ENCODE measurements at regions of chr9 and their contacts with region 1.

Region 1: GRCh38 chr9:92963831-92964626 is 16.7 kb downstream of the FGD3 start:
- DNase-seq: peak; percentile 71
- H3K4me3 Mint-ChIP-seq: peak overlapping the region; percentile 88
- H3K27ac Mint-ChIP-seq: peak overlapping the region; percentile 95
- H3K4me1 Mint-ChIP-seq: peaks cover 45% of the 10 kb centered on the region
- H3K27me3 Mint-ChIP-seq: no peaks in the 10 kb centered on the region

Region 2: GRCh38 chr9:92877531-92878430 is 86.2 kb before region 1 on chr9 and contains the start of gene ZNF484:
- intact Hi-C with region 1: loop called (anchors 5 kb)
- DNase-seq: peak; percentile 93
- H3K4me3 Mint-ChIP-seq: peak within 1 kb of the TSS; percentile 95
- H3K27ac Mint-ChIP-seq: peak within 1 kb of the TSS; percentile 95
- H3K4me1 Mint-ChIP-seq: peaks cover 33% of the 10 kb centered on the region
- H3K27me3 Mint-ChIP-seq: no peaks in the 10 kb centered on the region
- total RNA-seq, gene ZNF484: 7.5 and 8.0 TPM in 2 replicates

Region 3: GRCh38 chr9:93003552-93004407 is 39.8 kb after region 1 on chr9:
- intact Hi-C with region 1: loop called (anchors 5 kb)
- DNase-seq: peak; percentile 40
- H3K4me3 Mint-ChIP-seq: no peak overlapping the region
- H3K27ac Mint-ChIP-seq: peak overlapping the region; percentile 72
- H3K4me1 Mint-ChIP-seq: peaks cover 31% of the 10 kb centered on the region
- H3K27me3 Mint-ChIP-seq: no peaks in the 10 kb centered on the region

Region 4: DNA sequence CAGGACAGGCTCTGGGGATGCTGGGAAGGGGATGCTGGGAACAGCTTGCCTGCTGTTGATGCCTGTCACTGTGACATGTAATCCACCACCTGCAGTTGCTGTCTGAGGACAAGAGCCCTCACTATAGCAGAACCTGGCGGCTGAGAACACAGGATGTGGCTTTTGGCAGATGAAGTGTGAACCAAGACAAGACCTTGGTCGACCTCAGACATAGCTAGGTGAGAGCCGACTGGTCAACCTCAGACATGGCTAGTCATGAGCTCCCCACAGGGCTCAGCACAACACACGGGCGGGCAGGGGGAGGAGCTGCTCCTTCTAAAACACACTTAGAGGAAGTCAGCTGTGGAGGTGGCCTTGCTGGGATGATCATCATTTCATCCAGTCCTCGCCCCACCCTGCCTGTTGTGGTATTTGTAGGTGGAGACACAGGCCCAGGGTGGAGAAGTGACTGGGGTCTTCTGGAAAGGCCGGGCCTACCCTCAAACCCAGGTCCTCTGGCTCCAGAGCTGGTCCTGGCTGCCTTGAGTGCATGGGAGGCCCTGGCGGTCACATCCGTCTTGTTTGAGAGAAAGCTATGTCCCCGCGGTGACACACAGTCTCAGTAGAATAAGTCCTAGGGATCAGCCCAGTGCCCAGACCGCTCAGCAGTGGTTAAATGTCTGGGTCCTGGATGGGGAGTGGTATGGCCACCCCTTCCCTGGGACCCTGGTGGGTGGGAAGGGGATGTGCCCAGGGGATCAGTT is 100.5 kb after region 1 on chr9:
- intact Hi-C with region 1: loop called (anchors 5 kb)
- DNase-seq: peak; percentile 90
- H3K4me3 Mint-ChIP-seq: peak overlapping the region; percentile 76
- H3K27ac Mint-ChIP-seq: peak overlapping the region; percentile 94
- H3K4me1 Mint-ChIP-seq: peaks cover 64% of the 10 kb centered on the region
- H3K27me3 Mint-ChIP-seq: no peaks in the 10 kb centered on the region

Region 5: DNA sequence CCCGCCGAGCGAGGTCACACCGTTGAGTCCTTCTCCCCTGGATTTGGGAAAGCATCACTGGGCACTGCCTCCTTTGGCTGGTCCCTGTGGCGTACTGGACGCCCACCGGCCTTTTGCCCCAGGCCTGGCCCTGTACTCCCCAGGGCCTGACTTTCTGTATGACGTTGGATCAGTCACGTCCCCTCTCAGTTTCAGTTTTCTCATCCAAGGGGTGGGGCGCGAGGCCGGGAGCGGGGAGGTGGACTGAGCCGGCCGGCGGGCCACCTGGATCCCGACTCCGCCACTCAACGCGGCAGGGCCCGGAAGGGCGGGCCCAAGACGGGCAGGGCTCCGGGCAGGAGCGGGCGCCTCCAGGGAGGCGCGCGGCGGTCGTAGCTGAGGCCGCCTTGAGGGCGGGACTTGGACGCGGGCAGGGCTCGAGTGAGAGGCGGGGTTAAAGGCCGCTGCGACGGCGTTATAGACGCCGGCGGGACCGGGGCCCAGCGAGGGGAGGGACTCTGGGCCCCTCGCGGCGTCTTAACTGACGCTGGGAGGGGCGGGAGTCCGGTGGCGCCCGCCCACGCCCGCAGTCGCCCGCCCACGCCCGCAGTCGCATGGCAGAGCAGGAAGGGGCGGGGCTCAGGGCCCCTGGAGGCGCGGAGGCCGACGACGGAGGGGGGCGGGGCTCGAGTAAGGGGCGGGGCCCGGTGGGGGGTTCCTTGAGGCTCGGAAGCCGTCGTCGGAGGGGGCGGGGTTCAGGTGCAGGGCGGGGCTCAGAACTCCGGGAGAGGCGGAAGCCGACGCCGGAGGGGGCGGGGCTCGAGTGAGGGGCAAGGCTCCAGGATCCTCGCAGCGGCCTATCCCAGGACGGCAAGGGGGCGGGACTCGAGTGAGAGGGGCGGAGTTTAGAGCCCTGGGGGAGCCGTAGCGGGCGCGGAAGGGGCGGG is 131.4 kb after region 1 on chr9:
- intact Hi-C with region 1: loop called (anchors 2 kb)
- DNase-seq: peak; percentile 100
- H3K4me3 Mint-ChIP-seq: peak overlapping the region; percentile 83
- H3K27ac Mint-ChIP-seq: peak overlapping the region; percentile 98
- H3K4me1 Mint-ChIP-seq: peaks cover 66% of the 10 kb centered on the region
- H3K27me3 Mint-ChIP-seq: no peaks in the 10 kb centered on the region

Region 6: DNA sequence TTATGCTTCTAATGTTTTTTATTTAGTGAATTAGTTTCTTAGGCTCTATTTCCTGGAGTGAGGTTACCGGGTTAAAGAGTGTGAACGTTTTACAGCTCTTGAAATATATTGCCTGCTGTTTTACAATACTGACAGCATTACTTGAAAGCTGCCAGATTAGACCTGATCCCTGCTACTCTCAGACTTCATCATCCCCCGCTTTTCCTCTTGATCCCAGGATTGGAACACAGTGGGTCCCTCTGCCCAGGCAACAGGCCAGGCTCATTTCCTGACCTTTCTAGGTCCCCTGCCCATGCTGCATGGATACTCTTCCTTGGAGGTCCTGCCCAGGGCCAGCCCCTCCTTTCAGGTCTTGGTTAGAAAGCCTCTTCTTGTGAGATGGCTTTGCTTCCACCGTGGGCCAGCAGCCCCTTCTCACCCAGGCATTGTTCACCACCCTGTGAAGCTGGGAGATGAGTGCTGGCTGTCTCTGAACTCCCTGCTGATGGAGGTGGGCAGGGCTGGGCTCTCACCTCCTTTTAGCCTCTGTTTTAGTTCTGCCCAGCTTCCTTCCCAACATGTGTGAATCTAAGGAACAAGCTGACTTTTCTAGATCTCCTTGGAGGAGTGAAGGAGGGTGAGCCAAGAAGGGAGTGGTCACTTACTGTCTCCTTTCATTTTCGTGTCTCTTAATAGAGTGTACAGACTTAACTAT is 504.9 kb after region 1 on chr9:
- intact Hi-C with region 1: loop called (anchors 10 kb)
- DNase-seq: no peak
- H3K4me3 Mint-ChIP-seq: peak overlapping the region; percentile 28
- H3K27ac Mint-ChIP-seq: peak overlapping the region; percentile 91
- H3K4me1 Mint-ChIP-seq: peaks cover 75% of the 10 kb centered on the region
- H3K27me3 Mint-ChIP-seq: no peaks in the 10 kb centered on the region

Region 7: GRCh38 chr9:94166237-94166963 is 1202.4 kb after region 1 on chr9:
- intact Hi-C with region 1: loop called (anchors 10 kb)
- DNase-seq: peak; percentile 91
- H3K4me3 Mint-ChIP-seq: peak overlapping the region; percentile 88
- H3K27ac Mint-ChIP-seq: peak overlapping the region; percentile 84
- H3K4me1 Mint-ChIP-seq: peaks cover 44% of the 10 kb centered on the region
- H3K27me3 Mint-ChIP-seq: no peaks in the 10 kb centered on the region

Measured in activated T-helper 2 cell treated with anti-CD3 and anti-CD28 coated beads, Interferon-gamma antibody, Interleukin-2, Interleukin-4, amounts not matched to agents 10 μg/mL and 5 μg/mL and 100 μg/mL, durations not matched to agents 14 hours and 24 hours and 36 hours (primary cell).